GM13976 (cell line): ENCODE measurements at regions of chr7 and their contacts with region 1.

Region 1: DNA sequence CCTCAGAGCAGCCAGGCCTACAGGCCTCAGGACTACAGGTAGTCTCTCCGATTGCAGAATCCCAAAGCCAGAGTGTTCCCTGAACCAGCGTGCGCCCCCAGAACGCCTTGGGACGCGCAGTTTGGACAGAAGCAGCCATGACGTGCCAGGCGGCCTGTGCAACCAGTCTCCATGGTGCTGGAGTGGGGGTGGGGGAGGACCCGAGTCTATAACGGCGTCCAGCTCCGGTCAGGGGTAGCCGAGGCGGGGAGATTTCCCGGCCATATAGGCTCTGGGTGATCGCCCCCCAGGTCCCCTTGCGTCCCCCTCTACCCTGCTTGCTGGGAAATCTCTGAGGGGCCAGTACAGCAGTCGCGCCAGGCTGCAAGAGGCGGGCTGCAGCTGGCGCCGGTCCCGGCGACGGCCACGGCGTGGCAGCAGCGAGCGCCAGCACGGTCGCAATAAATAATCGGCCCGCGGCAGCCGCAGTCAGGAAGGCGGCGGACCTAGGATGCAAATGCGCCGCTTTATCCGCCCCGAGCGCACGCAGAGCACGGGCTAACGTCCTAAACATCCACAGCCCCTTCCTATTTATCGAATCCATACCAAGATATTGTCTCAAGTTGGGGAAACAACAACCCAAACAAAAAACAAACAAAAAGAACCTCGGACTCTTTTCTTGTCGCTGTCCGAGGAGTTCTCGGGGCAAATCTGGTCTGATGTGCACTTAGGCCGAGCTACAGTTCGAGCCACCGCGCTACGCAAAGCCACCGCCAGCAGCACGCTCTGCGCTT is 1.6 kb downstream of the HOXA3 start:
- DNase-seq: peak; percentile 91
- CTCF ChIP-seq: peak; percentile 95

Region 2: DNA sequence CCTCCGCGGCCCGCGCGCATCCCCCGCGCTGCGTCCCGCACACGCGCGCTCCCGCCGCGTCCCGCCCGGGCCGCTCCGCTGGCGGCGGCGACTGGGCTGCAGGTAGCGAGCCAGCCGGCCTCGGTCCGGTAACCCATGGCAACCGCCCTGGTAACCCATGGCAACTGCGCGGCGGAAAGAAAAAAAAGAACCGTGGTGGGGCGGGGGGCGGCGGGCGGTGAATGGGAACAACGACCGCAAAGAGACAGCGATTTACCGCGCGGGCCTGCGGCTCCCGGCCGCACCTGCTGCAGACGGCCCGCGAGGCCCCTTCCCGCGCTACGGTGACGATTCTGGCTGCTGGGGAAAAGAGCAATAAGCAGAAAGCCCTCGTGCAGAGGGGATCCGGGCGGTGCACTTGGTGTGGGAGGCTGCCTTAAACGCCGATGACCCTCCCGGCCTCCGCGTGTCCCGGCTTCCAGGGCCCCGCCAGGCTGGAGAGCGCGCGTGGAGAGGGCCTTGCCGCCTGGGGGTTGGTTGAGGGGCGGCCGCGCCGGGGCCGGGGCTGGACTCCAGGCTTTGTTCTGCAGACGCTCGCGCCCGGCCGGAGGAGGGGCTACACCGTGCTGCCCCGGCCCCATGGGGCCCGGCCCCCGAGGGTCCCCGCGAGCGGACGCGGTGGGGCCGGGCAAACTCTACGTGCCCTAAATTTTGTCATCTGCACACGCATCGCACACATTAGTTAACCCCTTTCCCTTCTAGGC is 774.4 kb before region 1 on chr7:
- in situ Hi-C with region 1: loop called (anchors 10 kb)
- DNase-seq: peak; percentile 59
- CTCF ChIP-seq: no peak

Region 3: GRCh38 chr7:26853788-26854393 is 296.9 kb before region 1 on chr7:
- in situ Hi-C with region 1: loop called (anchors 10 kb)
- DNase-seq: no peak
- CTCF ChIP-seq: no peak